Mammary epithelial cell (primary cell): ENCODE measurements at regions of chr1 and their contacts with region 1.

Region 1: DNA sequence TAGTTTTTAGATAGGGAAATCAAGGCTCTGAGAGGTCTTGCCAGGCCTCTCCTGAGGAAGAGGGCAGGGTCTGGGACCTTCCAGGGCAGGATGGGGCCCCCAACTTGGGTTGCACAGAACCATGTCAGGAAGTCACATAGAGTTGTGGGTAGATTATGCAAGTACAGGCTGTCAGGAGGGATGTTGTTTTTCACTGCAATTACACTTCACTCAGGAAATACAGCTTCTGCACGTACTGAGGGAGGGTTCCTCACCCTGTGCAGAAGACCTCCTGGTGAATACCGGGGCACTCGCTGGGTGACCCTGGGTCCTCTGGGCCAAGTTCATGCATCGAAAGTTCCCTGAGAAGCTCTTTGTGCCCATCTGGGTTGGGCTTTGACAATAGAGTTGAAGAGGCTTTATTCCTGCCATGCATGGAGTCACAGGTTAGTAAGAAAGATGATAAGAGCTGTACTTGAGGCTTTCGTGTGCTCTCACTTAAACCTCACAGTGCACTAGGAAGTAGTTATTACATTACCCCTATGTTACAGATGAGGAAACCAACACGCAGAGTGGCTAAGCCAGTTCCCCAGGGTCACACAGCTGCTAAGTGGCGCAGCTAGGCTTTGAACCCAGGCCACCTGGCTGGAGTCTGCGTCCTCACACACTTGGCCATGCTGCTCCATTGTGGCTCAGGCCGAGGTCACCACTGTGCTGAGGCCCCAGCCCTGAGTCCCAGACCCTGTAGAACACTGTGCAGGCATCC is 16.2 kb upstream of the TNFRSF1B start:
- DNase-seq: no peak
- H3K4me3 ChIP-seq: no peak overlapping the region
- H3K27ac ChIP-seq: no peak overlapping the region
- H3K4me1 ChIP-seq: no peaks in the 10 kb centered on the region
- H3K27me3 ChIP-seq: no peaks in the 10 kb centered on the region
- CTCF ChIP-seq: no peak

Region 2: GRCh38 chr1:11893907-11894251 is 256.7 kb before region 1 on chr1:
- CTCF ChIA-PET with region 1: interaction called, 15 read pairs
- dilution Hi-C with region 1: no loop called
- in situ Hi-C with region 1: no loop called
- intact Hi-C with region 1: no loop called
- DNase-seq: peak; percentile 42
- H3K4me3 ChIP-seq: no peak overlapping the region
- H3K27ac ChIP-seq: no peak overlapping the region
- H3K4me1 ChIP-seq: peaks cover 3% of the 10 kb centered on the region
- H3K27me3 ChIP-seq: peaks cover 7% of the 10 kb centered on the region
- CTCF ChIP-seq: peak; percentile 93 to 98

Region 3: DNA sequence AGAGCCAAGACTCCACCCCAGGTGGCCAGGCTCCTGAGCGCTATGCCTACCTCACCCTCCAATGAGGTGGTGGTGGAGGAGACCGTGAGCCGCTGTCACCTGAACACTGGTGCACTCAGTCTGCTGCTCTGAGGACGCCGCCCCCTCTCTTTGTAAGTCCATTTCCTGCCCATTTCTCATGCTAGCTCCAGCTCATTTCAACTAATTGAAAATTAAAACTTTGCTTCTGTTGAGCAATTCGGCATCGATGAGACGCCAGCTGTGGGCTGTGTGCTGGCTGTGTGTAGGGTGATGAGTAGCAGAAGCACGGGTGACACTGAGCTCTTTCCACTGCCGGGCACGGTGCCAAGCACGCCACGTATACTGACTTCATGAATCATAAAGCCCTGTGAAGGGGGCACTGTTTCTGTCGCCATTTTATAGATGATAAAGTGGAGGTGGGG is 27.4 kb after region 1 on chr1:
- CTCF ChIA-PET with region 1: no interaction called
- dilution Hi-C with region 1: no loop called
- in situ Hi-C with region 1: no loop called
- intact Hi-C with region 1: no loop called
- DNase-seq: peak; percentile 42
- H3K4me3 ChIP-seq: no peak overlapping the region
- H3K27ac ChIP-seq: no peak overlapping the region
- H3K4me1 ChIP-seq: peaks cover 5% of the 10 kb centered on the region
- H3K27me3 ChIP-seq: peaks cover 3% of the 10 kb centered on the region
- CTCF ChIP-seq: no peak